ENCODE measurements at regions of chr20 and their contacts with region 1.

Region 1: DNA sequence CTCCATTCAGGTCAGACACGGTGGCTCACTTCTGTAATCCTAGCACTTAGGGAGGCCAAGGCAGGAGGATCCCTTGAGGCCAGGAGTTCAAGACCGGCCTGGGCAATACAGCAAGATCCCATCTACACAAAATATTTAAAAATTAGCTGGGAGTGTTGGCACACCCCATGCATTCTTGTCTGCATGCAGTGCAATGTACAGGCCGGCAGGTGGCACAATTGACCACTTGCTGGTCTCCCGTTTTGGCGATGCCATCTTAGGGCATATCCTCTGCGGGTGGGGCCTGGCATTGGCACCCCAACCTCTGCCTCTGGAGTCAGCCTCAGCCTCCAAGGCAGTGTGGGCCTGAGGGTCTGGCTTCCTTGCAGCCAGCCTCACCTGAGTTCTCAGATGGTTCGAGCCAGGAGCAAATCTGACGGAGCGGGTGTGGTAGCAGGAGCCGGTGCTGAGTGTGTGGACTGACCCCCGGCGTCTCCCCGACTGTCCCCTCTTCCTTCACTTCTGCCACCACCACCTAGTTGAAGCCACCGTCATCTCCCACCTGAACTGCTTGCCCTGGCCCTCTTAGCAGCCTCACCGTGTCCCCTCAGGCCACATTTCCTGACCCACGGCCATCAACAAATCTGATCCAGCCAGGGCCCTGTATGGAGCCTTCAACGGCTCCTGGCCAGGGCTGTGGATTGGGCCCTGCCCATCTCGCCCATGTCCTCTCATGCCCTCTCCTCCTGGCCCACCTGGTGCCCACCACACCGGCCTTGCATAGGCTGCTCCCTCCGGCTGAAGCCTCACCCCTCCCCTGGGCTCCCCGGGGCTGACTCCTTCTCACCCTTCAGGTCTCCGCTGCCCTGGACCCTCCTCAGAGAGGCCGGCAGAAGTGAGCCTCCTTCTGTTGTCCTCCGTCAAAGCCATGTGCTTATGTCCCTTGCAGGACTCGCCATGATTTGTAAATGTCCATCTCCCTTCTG is 44.0 kb downstream of the EFCAB8 start:
- DNase-seq: no peak
- ATAC-seq: peak in 1 of 2 donors; percentile 30
- H3K4me3 ChIP-seq: no peak overlapping the region
- H3K27ac ChIP-seq: no peak overlapping the region
- H3K4me1 ChIP-seq: no peaks in the 10 kb centered on the region
- H3K27me3 ChIP-seq: no peaks in the 10 kb centered on the region
- CTCF ChIP-seq: peak; percentile 58 to 81 (median 78)
- POLR2A ChIP-seq: no peak

Region 2: GRCh38 chr20:32982617-32983458 is 80.1 kb after region 1 on chr20:
- in situ Hi-C with region 1: no loop called
- intact Hi-C with region 1: no loop called
- DNase-seq: no peak
- ATAC-seq: no peak
- H3K4me3 ChIP-seq: no peak overlapping the region
- H3K27ac ChIP-seq: no peak overlapping the region
- H3K4me1 ChIP-seq: no peaks in the 10 kb centered on the region
- H3K27me3 ChIP-seq: no peaks in the 10 kb centered on the region
- CTCF ChIP-seq: no peak
- POLR2A ChIP-seq: no peak

Region 3: DNA sequence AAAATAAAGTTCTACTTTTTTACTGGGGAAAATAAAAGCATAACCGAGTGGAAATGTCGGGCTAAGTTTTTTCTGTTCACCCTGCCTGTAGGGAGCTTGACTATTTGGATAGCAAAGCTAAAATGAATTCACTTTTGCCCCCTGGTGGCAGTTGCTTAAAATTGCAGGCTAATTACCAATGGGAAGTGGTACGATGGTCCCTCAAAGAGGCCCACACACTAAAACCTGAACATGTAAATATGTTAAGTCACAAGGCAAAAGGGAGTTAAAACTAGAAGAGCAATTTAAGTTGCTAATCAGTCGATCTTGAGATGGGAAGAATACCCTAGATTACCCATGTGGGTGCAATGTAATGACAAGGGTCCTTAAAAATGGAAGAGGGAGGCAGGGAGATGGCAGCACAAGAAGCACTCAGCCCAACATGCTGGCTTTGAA is 102.4 kb after region 1 on chr20:
- in situ Hi-C with region 1: loop called in 1 of 4 experiments (anchors 25 kb)
- intact Hi-C with region 1: no loop called
- DNase-seq: no peak
- ATAC-seq: no peak
- H3K4me3 ChIP-seq: no peak overlapping the region
- H3K27ac ChIP-seq: no peak overlapping the region
- H3K4me1 ChIP-seq: no peaks in the 10 kb centered on the region
- H3K27me3 ChIP-seq: no peaks in the 10 kb centered on the region
- CTCF ChIP-seq: peak in 1 of 5 experiments; percentile 15
- POLR2A ChIP-seq: no peak

Region 4: GRCh38 chr20:33291830-33292355 is 389.2 kb after region 1 on chr20:
- in situ Hi-C with region 1: loop called in 3 of 4 experiments (anchors 5 to 25 kb)
- intact Hi-C with region 1: no loop called
- DNase-seq: no peak
- ATAC-seq: no peak
- H3K4me3 ChIP-seq: no peak overlapping the region
- H3K27ac ChIP-seq: no peak overlapping the region
- H3K4me1 ChIP-seq: no peaks in the 10 kb centered on the region
- H3K27me3 ChIP-seq: peaks cover 3 to 8% (median 3%) of the 10 kb centered on the region in 3 donors
- CTCF ChIP-seq: peak; percentile 44 to 68 (median 58)
- POLR2A ChIP-seq: no peak